ENCODE measurements at regions of chr1 and their contacts with region 1.

Region 1: DNA sequence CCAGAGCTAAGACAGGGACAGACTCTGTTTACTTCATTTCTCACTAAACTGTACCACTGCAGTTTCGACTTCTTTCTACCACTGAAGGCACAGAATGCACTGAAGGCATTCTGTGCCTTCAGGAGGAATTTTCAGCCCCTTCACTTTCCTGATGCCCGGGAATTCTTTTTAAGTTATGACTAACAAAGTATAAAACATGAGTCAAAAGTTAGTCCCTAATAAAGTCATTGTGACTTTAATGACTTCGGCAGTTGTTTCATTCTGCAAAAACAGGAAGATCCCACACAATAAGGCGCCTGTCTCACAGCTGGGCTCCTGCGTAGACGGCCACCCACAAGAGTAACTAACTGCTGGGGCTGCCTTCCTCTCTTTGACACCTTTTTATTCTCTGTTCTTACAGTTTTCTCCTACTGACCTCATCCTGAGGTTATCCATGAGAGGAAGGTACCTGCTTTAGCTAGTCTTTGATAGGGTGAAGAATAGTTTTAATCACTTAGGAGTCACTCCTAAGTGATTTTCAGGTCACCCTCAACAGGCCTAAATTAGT is 183.9 kb upstream of the SGIP1 start:
- DNase-seq: peak; percentile 68
- ATAC-seq: peak; percentile 61
- H3K4me3 Mint-ChIP-seq: peak overlapping the region; percentile 76
- H3K27ac Mint-ChIP-seq: peak overlapping the region; percentile 91
- H3K4me1 Mint-ChIP-seq: peaks cover 94% of the 10 kb centered on the region
- H3K27me3 Mint-ChIP-seq: no peaks in the 10 kb centered on the region

Region 2: GRCh38 chr1:66033781-66034180 is 316.3 kb before region 1 on chr1:
- CTCF ChIA-PET with region 1: no interaction called
- DNase-seq: no peak
- ATAC-seq: no peak
- H3K4me3 Mint-ChIP-seq: no peak overlapping the region
- H3K27ac Mint-ChIP-seq: no peak overlapping the region
- H3K4me1 Mint-ChIP-seq: peaks cover 2% of the 10 kb centered on the region
- H3K27me3 Mint-ChIP-seq: peaks cover 23% of the 10 kb centered on the region

Region 3: GRCh38 chr1:66276218-66276617 is 73.9 kb before region 1 on chr1:
- CTCF ChIA-PET with region 1: interaction called, 15 read pairs
- DNase-seq: peak; percentile 77
- ATAC-seq: peak; percentile 81
- H3K4me3 Mint-ChIP-seq: peak overlapping the region; percentile 52
- H3K27ac Mint-ChIP-seq: peak overlapping the region; percentile 79
- H3K4me1 Mint-ChIP-seq: peaks cover 93% of the 10 kb centered on the region
- H3K27me3 Mint-ChIP-seq: no peaks in the 10 kb centered on the region

Region 4: GRCh38 chr1:66360285-66360724 is 10.2 kb after region 1 on chr1:
- CTCF ChIA-PET with region 1: interaction called, 30 read pairs
- DNase-seq: no peak
- ATAC-seq: no peak
- H3K4me3 Mint-ChIP-seq: no peak overlapping the region
- H3K27ac Mint-ChIP-seq: peak overlapping the region; percentile 64
- H3K4me1 Mint-ChIP-seq: peaks cover 81% of the 10 kb centered on the region
- H3K27me3 Mint-ChIP-seq: no peaks in the 10 kb centered on the region